ENCODE measurements at regions of chr11 and their contacts with region 1.

Region 1: DNA sequence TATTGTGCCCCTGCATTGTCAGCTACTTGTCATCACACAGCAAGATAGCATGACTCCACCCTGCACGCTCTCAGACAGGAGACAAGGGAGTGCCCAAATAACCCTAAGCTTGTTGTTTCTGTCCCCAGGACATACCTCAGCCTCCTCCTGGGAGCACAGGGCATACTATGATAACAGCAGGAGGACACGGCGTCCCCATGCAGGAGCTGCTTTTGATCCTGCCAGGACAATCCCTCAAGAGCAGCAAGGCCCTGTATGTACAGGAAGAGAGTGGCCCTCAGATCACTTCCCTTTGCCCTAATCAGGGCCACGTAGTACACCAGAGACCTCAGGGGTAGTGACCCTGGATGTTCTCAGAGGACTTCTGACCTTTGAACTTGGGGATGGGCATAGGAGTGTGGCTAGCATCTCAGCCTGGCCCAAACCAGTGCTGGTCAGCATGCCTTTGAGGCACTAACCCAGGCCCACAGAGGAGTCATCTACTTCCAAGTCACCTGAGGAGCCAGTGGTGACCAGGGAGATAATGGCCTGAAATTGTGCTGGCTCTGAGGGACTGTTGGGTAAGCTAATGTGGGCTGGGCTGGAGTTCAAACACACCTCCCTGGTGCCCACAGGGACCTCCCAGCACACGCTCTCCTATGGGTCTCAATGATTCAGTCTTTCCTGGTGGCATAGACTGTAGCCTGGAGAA is 9.2 kb downstream of the APOA4 start:
- H3K4me3 ChIP-seq: no peak overlapping the region
- H3K27ac ChIP-seq: no peak overlapping the region
- H3K4me1 ChIP-seq: no peaks in the 10 kb centered on the region
- CTCF ChIP-seq: no peak

Region 2: DNA sequence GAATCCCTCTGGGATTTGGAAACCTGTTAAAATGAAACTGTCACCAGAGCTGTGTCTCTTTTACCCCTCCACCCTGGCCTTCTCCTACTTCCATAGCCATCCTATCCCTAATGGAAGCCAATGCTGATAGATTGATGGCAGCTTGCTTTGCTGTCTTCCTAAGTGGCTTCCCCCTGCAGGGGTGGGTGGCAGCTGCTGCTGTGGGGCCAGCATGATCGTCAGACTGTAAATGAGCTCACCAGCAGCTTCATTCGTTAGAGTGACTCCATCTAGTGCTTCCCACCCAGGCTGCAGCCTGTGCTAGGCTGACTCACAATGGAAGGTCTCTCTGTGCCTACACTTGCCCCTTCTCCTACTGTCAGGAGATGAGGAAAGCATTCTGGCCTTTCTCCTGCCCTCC is 352.1 kb before region 1 on chr11:
- CTCF ChIA-PET with region 1: no interaction called
- POLR2A ChIA-PET with region 1: no interaction called
- H3K4me3 ChIP-seq: no peak overlapping the region
- H3K27ac ChIP-seq: no peak overlapping the region; the same call in 1 of the 2 replicates
- H3K4me1 ChIP-seq: peaks cover 9% of the 10 kb centered on the region
- CTCF ChIP-seq: 0 out of 2 replicates have a peak, but pooled peaks have one; percentile 9

Region 3: GRCh38 chr11:116782728-116783127 is 31.2 kb before region 1 on chr11:
- CTCF ChIA-PET with region 1: no interaction called
- POLR2A ChIA-PET with region 1: no interaction called
- H3K4me3 ChIP-seq: no peak overlapping the region
- H3K27ac ChIP-seq: no peak overlapping the region
- H3K4me1 ChIP-seq: no peaks in the 10 kb centered on the region
- CTCF ChIP-seq: no peak

Region 4: DNA sequence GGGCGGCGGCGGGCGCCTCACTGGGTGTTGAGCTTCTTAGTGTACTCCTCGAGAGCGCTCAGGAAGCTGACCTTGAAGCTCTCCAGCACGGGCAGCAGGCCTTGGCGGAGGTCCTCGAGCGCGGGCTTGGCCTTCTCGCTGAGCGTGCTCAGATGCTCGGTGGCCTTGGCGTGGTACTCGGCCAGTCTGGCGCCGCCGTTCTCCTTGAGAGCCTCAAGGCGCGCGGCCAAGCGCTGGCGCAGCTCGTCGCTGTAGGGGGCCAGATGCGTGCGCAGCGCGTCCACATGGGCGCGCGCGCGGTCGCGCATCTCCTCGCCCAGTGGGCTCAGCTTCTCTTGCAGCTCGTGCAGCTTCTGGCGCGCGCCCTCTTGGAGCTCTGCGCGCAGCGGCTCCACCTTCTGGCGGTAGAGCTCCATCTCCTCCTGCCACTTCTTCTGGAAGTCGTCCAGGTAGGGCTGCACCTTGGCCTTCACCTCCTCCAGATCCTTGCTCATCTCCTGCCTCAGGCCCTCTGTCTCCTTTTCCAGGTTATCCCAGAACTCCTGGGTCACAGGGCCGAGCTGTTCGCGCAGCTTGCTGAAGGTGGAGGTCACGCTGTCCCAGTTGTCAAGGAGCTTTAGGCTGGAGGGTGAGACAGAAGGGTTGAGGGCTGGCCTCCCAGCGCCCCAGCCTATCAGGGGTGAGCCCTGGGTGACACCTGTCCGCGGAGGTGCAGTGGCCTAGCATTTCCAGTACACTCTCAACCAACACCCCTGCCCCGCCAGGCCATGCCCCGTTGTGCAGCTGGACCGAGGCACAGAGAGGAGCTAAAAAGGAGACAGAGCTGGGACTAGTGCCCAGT is 22.1 kb after region 1 on chr11:
- CTCF ChIA-PET with region 1: interaction called, 19 read pairs
- POLR2A ChIA-PET with region 1: no interaction called
- H3K4me3 ChIP-seq: no peak overlapping the region; the same call in 1 of the 2 replicates
- H3K27ac ChIP-seq: no peak overlapping the region; the same call in 1 of the 2 replicates
- H3K4me1 ChIP-seq: no peaks in the 10 kb centered on the region
- CTCF ChIP-seq: peak; percentile 90

Measured in HEK293 (cell line).